Dendritic cell treated with granulocyte-macrophage colony-stimulating factor and Interleukin-4, amounts not matched to agents 40 ng/mL and 50 ng/mL, for 4 days (primary cell): ENCODE measurements at regions of chrX and their contacts with region 1.

Region 1: GRCh38 chrX:7147978-7148824 is at the start of gene PUDP:
- H3K4me3 Mint-ChIP-seq: peak within 1 kb of the TSS; percentile 81
- H3K27ac Mint-ChIP-seq: peak within 1 kb of the TSS; percentile 81
- H3K4me1 Mint-ChIP-seq: peaks cover 10% of the 10 kb centered on the region
- H3K27me3 Mint-ChIP-seq: no peaks in the 10 kb centered on the region

Region 2: DNA sequence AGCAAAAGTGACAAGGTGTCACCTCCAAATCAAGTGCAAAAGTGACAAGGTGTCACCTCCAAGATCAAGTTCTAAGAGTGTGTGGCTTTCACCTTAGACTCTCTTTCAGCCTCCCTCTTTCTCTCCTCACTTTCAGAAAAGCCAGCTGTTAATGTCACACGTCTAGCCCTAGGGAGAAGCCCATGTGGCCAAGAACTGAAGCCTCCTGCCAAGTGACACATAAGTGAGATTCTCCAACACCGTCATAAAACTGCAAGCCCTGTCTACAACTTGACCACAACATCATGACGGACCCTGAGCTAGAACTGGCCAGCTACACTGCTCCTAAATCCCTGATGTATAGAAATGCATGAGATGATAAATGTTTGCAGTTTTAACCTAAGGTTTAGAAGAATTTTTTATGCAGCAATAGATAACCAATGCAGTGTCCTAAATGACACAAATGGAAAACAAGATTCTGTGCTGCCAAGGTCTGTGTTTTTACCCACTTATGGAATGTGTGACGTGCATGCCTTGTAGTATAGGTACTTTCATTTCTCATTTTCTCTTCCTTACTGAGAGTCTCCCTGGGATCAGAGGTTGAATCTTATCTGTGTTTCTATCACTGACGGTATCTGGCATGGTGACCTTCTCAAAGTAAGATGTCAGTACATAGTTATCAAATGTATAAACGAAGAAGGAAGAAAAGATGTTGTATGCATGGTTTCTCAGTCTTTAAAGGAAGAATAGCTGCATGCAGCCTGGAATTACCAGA is 944.6 kb before region 1 on chrX:
- intact Hi-C with region 1: no loop called
- H3K4me3 Mint-ChIP-seq: no peak overlapping the region
- H3K27ac Mint-ChIP-seq: no peak overlapping the region
- H3K4me1 Mint-ChIP-seq: no peaks in the 10 kb centered on the region
- H3K27me3 Mint-ChIP-seq: no peaks in the 10 kb centered on the region

Region 3: GRCh38 chrX:7083468-7084396 is 64.5 kb before region 1 on chrX:
- intact Hi-C with region 1: loop called (anchors 5 kb)
- H3K4me3 Mint-ChIP-seq: peak overlapping the region; percentile 45
- H3K27ac Mint-ChIP-seq: peak overlapping the region; percentile 84
- H3K4me1 Mint-ChIP-seq: peaks cover 63% of the 10 kb centered on the region
- H3K27me3 Mint-ChIP-seq: no peaks in the 10 kb centered on the region

Region 4: DNA sequence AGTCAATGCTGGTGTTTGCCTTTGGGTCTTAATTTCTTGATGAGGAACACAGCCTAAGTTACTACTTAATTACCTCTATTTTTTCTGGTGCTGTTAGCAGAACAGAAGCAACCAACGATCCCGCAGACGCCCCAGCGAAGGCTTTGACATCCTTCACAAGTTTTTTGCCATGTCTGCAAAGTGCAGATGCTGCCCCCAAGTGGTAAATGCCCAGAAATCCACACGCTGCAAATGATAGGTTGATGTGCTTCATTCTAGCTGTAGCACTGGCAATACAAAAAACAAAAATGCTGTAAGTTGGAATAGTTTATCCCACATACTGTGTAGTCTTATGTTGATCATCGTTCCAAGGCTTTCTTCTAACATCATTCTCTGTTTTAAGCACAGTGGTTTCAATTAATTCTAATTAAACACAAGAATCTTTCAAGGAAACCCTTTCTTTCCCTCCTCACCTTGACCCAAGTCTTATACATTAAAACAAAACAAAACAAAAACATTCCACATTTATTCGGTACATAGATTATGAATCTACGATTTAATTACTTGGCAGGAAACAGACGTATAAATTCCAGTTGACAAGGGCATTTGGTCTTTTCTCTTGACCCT is 777.8 kb after region 1 on chrX:
- intact Hi-C with region 1: loop called (anchors 10 kb)
- H3K4me3 Mint-ChIP-seq: no peak overlapping the region
- H3K27ac Mint-ChIP-seq: no peak overlapping the region
- H3K4me1 Mint-ChIP-seq: no peaks in the 10 kb centered on the region
- H3K27me3 Mint-ChIP-seq: no peaks in the 10 kb centered on the region